Naive thymus-derived CD4-positive, alpha-beta T cell (primary cell): ENCODE measurements at regions of chr15 and their contacts with region 1.

Region 1: DNA sequence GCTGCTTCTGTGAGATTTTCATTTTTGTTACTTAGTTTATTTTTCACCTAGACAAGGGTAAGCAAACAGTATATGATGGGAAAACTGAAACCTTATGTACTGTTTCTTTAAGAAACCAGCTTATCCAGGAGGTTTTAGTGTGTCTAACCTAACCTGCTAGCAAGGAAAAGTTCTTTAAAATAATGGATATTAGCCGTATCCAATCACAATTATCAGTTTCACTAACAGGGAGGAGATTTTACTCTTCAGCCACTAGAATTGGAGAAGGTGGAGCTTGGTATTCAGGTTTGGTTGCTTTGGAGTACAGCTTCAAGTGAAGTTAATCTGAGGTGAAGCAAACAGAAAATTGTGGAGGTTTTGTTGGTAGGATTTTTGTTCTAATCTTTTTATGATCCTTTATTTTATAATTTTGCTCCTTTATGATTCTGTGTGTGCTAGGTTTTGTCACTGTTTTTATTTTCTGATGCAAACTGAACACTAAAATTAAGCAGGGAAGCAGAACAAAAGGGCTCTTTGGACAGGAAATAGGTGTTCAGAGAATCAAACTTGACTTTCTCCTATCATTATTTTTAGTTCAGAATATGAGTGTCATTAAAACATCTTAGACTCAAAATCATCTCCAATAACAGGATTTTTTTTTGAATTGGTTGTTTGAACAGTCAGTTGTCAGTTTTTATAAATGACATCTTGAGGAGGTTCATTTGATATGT is 13.0 kb downstream of the ZFAND6 start:
- DNase-seq: peak in 7 of 9 donors; percentile 56 to 80 (median 63)
- ATAC-seq: peak; percentile 97
- H3K4me3 ChIP-seq: peak overlapping the region; percentile 10
- H3K4me3 Mint-ChIP-seq: peak overlapping the region; percentile 58 to 94 (median 84)
- H3K27ac ChIP-seq: peak overlapping the region; percentile 61
- H3K27ac Mint-ChIP-seq: peak overlapping the region; percentile 17 to 85 (median 65)
- H3K4me1 ChIP-seq: peaks cover 8 to 14% of the 10 kb centered on the region in 2 donors
- H3K4me1 Mint-ChIP-seq: peaks cover 36 to 89% (median 78%) of the 10 kb centered on the region in 7 donors
- H3K27me3 ChIP-seq: no peaks in the 10 kb centered on the region
- H3K27me3 Mint-ChIP-seq: no peaks in the 10 kb centered on the region

Region 2: DNA sequence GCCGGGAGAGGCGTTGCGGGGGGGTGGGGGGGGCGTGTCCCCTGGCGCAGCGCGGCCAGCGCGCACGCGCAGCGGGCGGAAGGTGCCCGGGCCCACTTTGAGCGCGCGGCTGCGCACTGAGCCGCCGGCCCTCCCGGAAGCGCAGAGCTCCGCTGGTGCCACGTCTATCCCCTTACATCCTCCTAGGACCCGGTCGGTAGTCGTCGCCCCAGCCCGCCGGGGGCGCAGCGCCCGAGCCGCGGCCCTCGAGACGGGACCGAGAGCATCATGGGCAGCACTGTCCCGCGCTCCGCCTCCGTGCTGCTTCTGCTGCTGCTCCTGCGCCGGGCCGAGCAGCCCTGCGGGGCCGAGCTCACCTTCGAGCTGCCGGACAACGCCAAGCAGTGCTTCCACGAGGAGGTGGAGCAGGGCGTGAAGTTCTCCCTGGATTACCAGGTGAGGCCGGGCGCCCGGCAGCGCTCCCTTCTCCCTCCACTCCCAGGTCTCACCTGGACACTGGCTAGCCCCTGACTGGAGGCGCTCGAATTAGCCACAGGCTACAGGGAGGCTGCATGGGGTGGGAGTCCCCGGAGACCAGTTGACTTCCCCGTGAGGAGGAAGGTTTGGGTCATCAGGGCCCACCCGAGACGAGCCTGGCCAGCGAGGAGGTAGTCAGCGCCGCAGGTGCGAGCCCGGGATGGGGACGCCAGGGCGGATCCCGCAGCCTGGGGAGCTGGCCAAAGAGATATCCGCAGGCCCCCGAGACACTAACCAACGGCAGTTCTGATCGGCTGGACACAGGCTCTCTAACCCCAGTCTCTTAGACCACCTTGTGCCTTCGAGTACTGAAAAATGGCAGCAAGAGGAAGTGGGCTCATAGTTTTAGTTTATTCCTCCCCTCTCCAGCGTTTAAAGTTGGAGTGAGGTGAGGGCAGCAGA is 761.2 kb before region 1 on chr15 and contains the start of gene TMED3:
- CTCF ChIA-PET with region 1: no interaction called
- POLR2A ChIA-PET with region 1: no interaction called
- intact Hi-C with region 1: loop called in 1 of 2 experiments (anchors 5 kb)
- DNase-seq: peak; percentile 58 to 85 (median 79)
- ATAC-seq: peak; percentile 92
- H3K4me3 ChIP-seq: peak within 1 kb of the TSS; percentile 90
- H3K4me3 Mint-ChIP-seq: peak within 1 kb of the TSS; percentile 85 to 93 (median 90)
- H3K27ac ChIP-seq: peak within 1 kb of the TSS; percentile 62
- H3K27ac Mint-ChIP-seq: peak within 1 kb of the TSS; percentile 4 to 74 (median 66)
- H3K4me1 ChIP-seq: peaks cover 13 to 20% of the 10 kb centered on the region in 2 donors
- H3K4me1 Mint-ChIP-seq: peaks cover 24 to 52% (median 46%) of the 10 kb centered on the region in 7 donors
- H3K27me3 ChIP-seq: no peaks in the 10 kb centered on the region
- H3K27me3 Mint-ChIP-seq: peaks cover 0 to 29% (median 4%) of the 10 kb centered on the region in 5 donors
- total RNA-seq, gene TMED3: 18.6 to 40.5 (median 21.1) TPM

Region 3: DNA sequence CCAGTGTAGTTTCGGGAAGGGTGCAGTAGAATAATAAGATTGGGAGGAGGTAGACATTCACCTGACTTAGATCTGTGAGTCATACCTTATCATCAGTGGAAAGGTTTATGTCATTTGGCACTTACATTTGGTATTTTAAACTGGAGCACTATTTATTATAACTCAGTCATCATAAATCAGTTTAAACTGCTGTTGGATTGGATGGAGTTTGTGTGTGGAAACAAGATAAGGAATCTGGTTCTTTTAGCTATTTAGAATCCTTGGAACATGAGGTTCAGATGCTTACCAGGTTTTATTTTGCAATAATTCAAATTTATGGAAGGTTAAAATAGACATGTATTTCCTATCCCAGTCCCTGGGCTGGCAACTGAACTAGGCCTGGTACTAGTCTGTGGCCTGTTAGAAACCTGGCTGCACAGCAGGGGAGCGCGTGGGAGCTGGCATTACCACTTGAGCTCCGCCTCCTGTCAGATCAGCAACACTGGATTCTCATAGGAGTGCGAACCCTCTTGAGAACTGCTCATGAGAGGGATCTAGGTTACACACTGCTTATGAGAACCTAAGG is 21.5 kb after region 1 on chr15:
- CTCF ChIA-PET with region 1: interaction called, 3 read pairs
- POLR2A ChIA-PET with region 1: interaction called, 4 read pairs
- intact Hi-C with region 1: loop called in 1 of 2 experiments (anchors 2 kb)
- DNase-seq: no peak
- ATAC-seq: peak; percentile 38
- H3K4me3 ChIP-seq: no peak overlapping the region
- H3K4me3 Mint-ChIP-seq: no peak overlapping the region
- H3K27ac ChIP-seq: no peak overlapping the region
- H3K27ac Mint-ChIP-seq: peak overlapping the region in 1 of 9 donors; percentile 52
- H3K4me1 ChIP-seq: peaks cover 0 to 4% of the 10 kb centered on the region in 2 donors
- H3K4me1 Mint-ChIP-seq: peaks cover 6 to 62% (median 48%) of the 10 kb centered on the region in 7 donors
- H3K27me3 ChIP-seq: no peaks in the 10 kb centered on the region
- H3K27me3 Mint-ChIP-seq: no peaks in the 10 kb centered on the region

Region 4: DNA sequence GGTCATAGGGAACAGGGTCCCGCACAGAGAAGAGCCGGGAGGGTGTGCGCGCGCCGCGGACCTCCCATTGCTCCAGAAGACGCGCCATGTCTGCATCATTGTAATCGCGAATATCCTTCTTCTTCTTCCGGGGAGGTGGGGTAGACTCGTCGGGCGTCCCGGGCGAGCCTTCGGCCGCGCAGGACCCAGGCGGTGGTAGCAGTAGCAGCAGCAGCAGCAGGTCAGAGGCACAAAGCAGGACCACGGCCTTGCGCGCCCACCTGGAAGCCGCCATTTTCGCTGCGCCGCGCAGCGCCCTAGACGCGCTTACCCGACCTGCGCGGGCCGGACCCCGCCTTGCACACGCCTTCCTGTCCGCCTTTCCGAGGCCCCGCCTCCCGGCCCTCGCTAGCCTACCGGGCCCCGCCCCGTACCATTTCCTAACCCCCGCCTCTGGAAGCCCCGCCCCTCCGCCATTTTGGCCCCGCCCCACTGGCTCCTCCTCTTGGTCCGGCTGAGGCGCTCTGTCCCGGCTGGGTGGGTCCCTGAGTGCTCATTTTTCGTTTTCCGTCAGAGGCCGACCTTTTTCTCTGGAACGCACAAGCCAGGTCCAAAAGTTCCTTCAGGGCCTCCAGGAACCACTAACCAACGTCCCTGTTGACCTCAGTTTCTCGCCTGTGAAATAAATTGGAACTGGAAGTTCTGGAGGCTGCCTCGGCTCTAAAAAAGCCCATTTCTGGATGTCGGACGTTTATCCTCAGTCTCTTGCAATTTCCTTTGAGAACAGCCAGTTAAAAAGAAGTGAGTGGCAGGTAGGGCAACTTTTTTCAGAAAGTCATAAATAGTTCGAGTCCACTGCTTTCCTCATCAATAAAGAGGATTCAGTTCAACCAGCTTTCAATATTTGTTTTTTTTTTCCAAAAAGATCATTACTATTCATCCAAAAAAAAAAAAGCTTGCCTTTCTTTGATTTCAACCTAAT is 917.4 kb after region 1 on chr15 and contains the start of gene MESD:
- CTCF ChIA-PET with region 1: no interaction called
- POLR2A ChIA-PET with region 1: no interaction called
- intact Hi-C with region 1: loop called in 1 of 2 experiments (anchors 2 kb)
- DNase-seq: peak; percentile 89 to 97 (median 93)
- ATAC-seq: peak; percentile 99
- H3K4me3 ChIP-seq: peak within 1 kb of the TSS; percentile 95
- H3K4me3 Mint-ChIP-seq: peak within 1 kb of the TSS; percentile 95 to 100 (median 98)
- H3K27ac ChIP-seq: peak within 1 kb of the TSS; percentile 90
- H3K27ac Mint-ChIP-seq: peak within 1 kb of the TSS; percentile 92 to 99 (median 99)
- H3K4me1 ChIP-seq: peaks cover 28 to 45% of the 10 kb centered on the region in 2 donors
- H3K4me1 Mint-ChIP-seq: peaks cover 37 to 68% (median 64%) of the 10 kb centered on the region in 7 donors
- H3K27me3 ChIP-seq: no peaks in the 10 kb centered on the region
- H3K27me3 Mint-ChIP-seq: no peaks in the 10 kb centered on the region
- total RNA-seq, gene MESD: 17.1 to 42.5 (median 38.3) TPM